Activated CD4-positive, alpha-beta T cell treated with anti-CD3 and anti-CD28 coated beads for 36 hours (primary cell): ENCODE measurements at regions of chr4 and their contacts with region 1.

Region 1: GRCh38 chr4:24568425-24568824 is 15.9 kb downstream of the DHX15 start:
- DNase-seq: no peak
- ATAC-seq: no peak
- H3K4me3 Mint-ChIP-seq: no peak overlapping the region
- H3K27ac Mint-ChIP-seq: no peak overlapping the region
- H3K4me1 Mint-ChIP-seq: peaks cover 78% of the 10 kb centered on the region
- H3K27me3 Mint-ChIP-seq: no peaks in the 10 kb centered on the region

Region 2: GRCh38 chr4:24551492-24552289 is 16.7 kb before region 1 on chr4:
- CTCF ChIA-PET with region 1: interaction called, 22 read pairs
- POLR2A ChIA-PET with region 1: interaction called, 4 read pairs
- intact Hi-C with region 1: no loop called
- DNase-seq: no peak
- ATAC-seq: no peak
- H3K4me3 Mint-ChIP-seq: no peak overlapping the region
- H3K27ac Mint-ChIP-seq: peak overlapping the region; percentile 31
- H3K4me1 Mint-ChIP-seq: peaks cover 42% of the 10 kb centered on the region
- H3K27me3 Mint-ChIP-seq: no peaks in the 10 kb centered on the region

Region 3: DNA sequence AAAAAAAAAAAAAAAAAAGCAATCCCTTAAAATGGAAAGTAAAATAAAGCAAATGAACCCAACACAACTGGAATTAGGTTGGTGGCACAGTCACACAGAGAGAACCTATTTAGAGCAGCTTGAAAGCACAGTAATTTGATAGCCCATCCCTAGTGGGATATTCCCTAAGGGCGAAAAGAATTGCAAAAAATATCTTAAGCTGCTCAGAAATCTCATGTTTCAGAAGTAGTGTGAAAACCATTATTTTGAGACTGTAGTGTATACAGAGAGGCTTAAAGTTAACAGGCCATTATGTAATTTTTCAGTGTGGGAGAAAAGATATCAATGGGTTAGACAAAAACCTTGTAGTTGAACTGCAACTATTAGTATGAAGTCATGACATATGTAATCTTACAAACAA is 56.0 kb after region 1 on chr4:
- CTCF ChIA-PET with region 1: no interaction called
- POLR2A ChIA-PET with region 1: no interaction called
- intact Hi-C with region 1: no loop called
- DNase-seq: no peak
- ATAC-seq: no peak
- H3K4me3 Mint-ChIP-seq: no peak overlapping the region
- H3K27ac Mint-ChIP-seq: no peak overlapping the region
- H3K4me1 Mint-ChIP-seq: no peaks in the 10 kb centered on the region
- H3K27me3 Mint-ChIP-seq: peaks cover 35% of the 10 kb centered on the region

Region 4: DNA sequence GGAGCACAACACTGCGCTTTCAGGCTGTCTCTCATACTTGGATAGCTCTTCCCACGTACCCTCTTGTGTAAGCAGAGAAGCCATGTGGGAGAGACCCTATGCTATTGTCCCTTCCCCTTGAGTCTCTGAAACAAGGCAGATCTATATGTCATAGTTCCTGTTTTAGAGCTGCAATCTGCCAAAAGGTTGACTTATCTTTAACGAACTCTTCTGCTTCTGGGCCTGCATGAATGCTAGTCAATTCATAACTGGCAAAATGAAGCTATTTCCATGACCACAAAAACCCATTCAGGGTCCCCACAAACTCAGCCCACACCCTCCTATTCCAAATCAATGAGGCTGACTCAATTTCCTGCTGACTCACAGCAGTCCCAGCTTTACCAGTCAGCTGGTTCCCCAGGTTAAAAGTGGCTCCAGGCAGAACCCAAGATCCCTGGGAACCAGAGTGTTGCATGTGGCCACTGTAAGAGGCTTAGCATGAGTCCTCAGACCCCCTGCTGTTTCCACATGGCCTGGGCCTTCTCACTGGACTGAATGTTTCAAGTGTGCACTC is 201.7 kb after region 1 on chr4:
- CTCF ChIA-PET with region 1: no interaction called
- POLR2A ChIA-PET with region 1: no interaction called
- intact Hi-C with region 1: no loop called
- DNase-seq: peak; percentile 17
- ATAC-seq: peak; percentile 77
- H3K4me3 Mint-ChIP-seq: no peak overlapping the region
- H3K27ac Mint-ChIP-seq: peak overlapping the region; percentile 10
- H3K4me1 Mint-ChIP-seq: peaks cover 8% of the 10 kb centered on the region
- H3K27me3 Mint-ChIP-seq: peaks cover 8% of the 10 kb centered on the region